HCT116 (cell line): ENCODE measurements at regions of chr19 and their contacts with region 1.

Region 1: DNA sequence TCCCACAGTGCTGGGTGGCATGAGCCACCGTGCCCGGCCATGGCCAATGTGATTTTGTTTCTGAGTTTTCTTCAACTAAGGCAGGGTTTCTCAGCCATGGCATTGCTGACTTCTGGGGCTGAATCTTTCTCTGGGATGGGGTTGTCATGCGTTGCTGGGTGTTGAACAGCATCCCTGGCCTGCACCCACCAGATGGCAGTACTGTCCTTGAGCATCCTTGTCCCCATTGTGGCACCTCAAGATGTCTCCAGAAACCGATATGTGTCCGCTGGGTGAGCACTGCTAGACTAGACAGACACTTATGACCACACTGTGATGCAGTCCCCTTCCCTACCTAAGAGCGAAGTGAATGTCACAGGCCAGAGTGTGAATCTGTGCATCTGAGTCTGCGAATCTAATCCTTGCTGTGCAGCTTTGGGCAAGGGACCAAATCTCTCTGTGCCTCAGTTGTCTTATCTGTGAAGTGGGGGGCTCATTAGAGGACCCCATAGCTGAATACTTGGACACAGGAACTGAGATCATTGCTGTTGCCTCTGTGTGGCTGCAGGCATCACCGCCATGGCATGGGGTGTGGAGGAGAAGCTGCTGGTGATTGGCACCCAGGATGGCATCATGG is 50.3 kb upstream of the SIN3B start:
- DNase-seq: peak; percentile 67
- ATAC-seq: peak; percentile 98
- H3K4me3 ChIP-seq: no peak overlapping the region
- H3K27ac ChIP-seq: no peak overlapping the region
- H3K4me1 ChIP-seq: no peaks in the 10 kb centered on the region
- H3K27me3 ChIP-seq: no peaks in the 10 kb centered on the region
- CTCF ChIP-seq: peak; percentile 88 to 94 (median 91)
- POLR2A ChIP-seq: no peak
- RAD21 ChIP-seq: peak; percentile 96

Region 2: GRCh38 chr19:16751733-16752132 is 27.2 kb before region 1 on chr19:
- CTCF ChIA-PET with region 1: no interaction called
- POLR2A ChIA-PET with region 1: no interaction called
- RAD21 ChIA-PET with region 1: no interaction called
- intact Hi-C with region 1: no loop called
- DNase-seq: no peak
- ATAC-seq: no peak
- H3K4me3 ChIP-seq: no peak overlapping the region
- H3K27ac ChIP-seq: no peak overlapping the region
- H3K4me1 ChIP-seq: no peaks in the 10 kb centered on the region
- H3K27me3 ChIP-seq: no peaks in the 10 kb centered on the region; the same call in 1 of the 2 replicates
- CTCF ChIP-seq: no peak
- POLR2A ChIP-seq: no peak
- RAD21 ChIP-seq: no peak

Region 3: DNA sequence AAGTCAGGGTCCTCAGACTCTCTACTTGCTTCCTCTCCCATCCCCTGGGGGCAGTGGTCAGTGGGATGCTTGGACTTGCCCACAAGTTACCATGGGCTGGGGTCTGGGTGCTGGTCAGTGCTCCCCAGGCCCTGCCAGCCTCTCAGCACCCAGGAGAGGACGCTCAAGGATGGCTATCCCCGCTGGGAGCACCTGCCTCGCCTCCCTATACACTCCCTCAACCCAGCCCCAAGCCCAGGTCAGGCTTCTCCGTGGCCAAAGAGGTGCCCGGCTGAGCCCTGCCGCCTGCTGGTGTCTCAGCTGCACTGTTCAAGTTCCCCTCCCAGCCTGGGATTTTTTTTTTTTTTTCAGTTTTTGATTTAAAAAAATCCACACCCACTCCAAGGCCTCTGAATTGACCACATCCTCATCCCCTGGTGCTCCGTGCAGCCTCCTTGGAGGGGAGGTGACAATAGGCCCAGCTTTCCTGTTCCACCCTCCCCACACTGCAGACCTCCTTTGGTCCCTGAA is 120.7 kb after region 1 on chr19:
- CTCF ChIA-PET with region 1: interaction called, 3 read pairs
- POLR2A ChIA-PET with region 1: no interaction called
- RAD21 ChIA-PET with region 1: no interaction called
- intact Hi-C with region 1: loop called (anchors 1 kb)
- DNase-seq: peak; percentile 35
- ATAC-seq: peak; percentile 88
- H3K4me3 ChIP-seq: no peak overlapping the region
- H3K27ac ChIP-seq: no peak overlapping the region
- H3K4me1 ChIP-seq: peaks cover 2 to 8% of the 10 kb centered on the region in 2 experiments; a peak in 2 of 4 replicates
- H3K27me3 ChIP-seq: no peaks in the 10 kb centered on the region
- CTCF ChIP-seq: peak; percentile 76 to 94 (median 76)
- POLR2A ChIP-seq: no peak
- RAD21 ChIP-seq: peak; percentile 89

Region 4: GRCh38 chr19:17052439-17053210 is 273.7 kb after region 1 on chr19:
- CTCF ChIA-PET with region 1: interaction called, 10 read pairs
- POLR2A ChIA-PET with region 1: no interaction called
- RAD21 ChIA-PET with region 1: interaction called in 1 of 2 experiments, 4 read pairs
- intact Hi-C with region 1: loop called (anchors 1 kb)
- DNase-seq: peak; percentile 22
- ATAC-seq: peak; percentile 69; the same call in 1 of the 2 replicates
- H3K4me3 ChIP-seq: no peak overlapping the region
- H3K27ac ChIP-seq: no peak overlapping the region
- H3K4me1 ChIP-seq: no peaks in the 10 kb centered on the region
- H3K27me3 ChIP-seq: no peaks in the 10 kb centered on the region
- CTCF ChIP-seq: peak; percentile 58 to 66 (median 58); a peak in 5 of 6 replicates
- POLR2A ChIP-seq: no peak
- RAD21 ChIP-seq: peak; percentile 78